PC-3 (cell line): ENCODE measurements at regions of chr7 and their contacts with region 1.

Region 1: DNA sequence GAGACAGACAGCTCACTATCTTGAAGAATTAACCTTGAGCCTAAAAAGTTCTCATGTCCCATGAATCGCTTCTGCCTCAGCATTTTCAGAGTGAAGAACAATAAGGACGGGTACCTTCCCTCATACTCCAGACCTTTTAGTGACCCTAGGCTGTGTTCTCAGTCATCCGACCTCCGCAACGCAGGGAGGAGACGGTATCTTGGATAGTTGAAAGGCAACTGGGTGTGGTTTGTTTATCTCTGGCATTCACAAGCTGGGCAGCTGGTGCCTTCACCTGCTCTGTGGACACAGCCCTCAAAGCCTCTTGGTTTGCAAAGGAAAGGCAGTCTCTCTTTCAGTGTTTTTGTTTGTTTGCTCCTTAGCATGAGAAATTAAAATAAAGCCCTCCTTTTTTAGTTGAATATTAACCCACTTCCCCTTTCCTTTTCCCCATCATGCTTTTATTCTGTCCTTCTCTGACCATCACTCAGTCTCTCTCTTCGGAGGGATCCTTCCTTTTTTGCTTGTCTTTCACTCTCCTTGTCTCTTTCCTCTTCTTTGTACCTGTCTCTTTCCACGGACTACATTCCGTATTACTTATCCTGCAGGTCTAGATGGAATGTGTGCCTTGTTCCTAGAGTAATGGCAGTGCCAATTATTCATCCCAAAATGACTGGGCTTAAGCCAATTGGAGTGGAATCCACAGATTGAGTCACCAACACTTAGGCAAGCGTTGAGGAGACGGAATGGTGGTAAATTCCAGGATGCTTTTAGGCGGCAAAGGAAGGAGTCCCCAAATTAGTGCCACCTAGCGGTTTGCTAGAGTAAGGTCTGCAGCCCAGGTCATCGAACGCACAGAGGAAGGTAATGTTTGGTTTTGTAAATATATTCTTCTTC is 45.8 kb downstream of the PRR15 start:
- DNase-seq: peak; percentile 88
- ATAC-seq: peak; percentile 8
- H3K4me3 ChIP-seq: peak overlapping the region; percentile 29; the same call in 1 of the 2 replicates
- H3K27ac ChIP-seq: peak overlapping the region; percentile 94
- H3K4me1 ChIP-seq: peaks cover 75% of the 10 kb centered on the region
- H3K27me3 ChIP-seq: no peaks in the 10 kb centered on the region
- CTCF ChIP-seq: peak; percentile 87

Region 2: DNA sequence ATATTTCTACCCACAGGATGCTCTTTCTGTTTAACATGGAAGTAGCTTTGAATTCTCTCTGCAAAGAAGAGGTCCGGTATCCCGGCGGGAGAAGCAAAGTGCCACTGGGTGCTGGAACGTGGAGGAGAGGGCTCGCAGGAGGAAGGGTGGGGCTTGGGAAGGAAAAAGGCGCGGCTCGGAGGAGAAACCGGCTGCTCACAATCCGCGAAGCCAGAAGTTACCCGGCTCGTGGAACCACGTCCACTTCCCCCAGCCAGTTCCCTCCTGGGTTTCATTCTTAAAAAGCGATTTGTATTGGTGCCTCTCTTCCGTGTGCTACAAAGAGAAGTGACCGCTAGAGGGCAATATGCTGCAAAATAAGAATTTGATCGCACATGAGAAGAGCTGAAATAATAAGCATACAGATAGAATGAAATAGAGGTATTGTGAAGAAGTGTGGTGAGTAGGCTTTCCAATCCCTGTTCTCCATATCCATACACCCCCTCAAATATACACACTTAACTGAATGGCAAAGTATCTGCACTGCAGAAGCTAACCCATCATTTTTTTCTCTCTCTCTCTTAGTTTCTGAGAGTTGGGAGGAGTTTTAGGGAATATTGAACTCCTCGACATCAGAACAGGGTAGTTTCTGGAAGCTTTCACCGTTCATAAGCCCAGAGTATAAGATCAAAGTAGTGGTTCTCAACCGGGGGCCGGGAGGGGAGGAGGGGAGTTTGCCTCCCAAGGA is 682.4 kb before region 1 on chr7:
- CTCF ChIA-PET with region 1: no interaction called
- POLR2A ChIA-PET with region 1: no interaction called
- intact Hi-C with region 1: loop called (anchors 10 kb)
- DNase-seq: peak; percentile 96
- ATAC-seq: peak; percentile 96
- H3K4me3 ChIP-seq: peak overlapping the region; percentile 75
- H3K27ac ChIP-seq: no peak overlapping the region
- H3K4me1 ChIP-seq: peaks cover 5% of the 10 kb centered on the region; the same call in 1 of the 2 replicates
- H3K27me3 ChIP-seq: no peaks in the 10 kb centered on the region
- CTCF ChIP-seq: peak; percentile 87

Region 3: GRCh38 chr7:29146057-29146706 is 463.2 kb before region 1 on chr7 and contains the start of gene CPVL:
- CTCF ChIA-PET with region 1: no interaction called
- POLR2A ChIA-PET with region 1: no interaction called
- intact Hi-C with region 1: loop called (anchors 10 kb)
- DNase-seq: peak; percentile 73
- ATAC-seq: peak; percentile 75
- H3K4me3 ChIP-seq: peak within 1 kb of the TSS; percentile 73
- H3K27ac ChIP-seq: peak within 1 kb of the TSS; percentile 13; the same call in 1 of the 2 replicates
- H3K4me1 ChIP-seq: peaks cover 17% of the 10 kb centered on the region
- H3K27me3 ChIP-seq: no peaks in the 10 kb centered on the region
- CTCF ChIP-seq: no peak
- total RNA-seq, gene CPVL: 14.7 and 15.3 TPM in 2 replicates

Region 4: DNA sequence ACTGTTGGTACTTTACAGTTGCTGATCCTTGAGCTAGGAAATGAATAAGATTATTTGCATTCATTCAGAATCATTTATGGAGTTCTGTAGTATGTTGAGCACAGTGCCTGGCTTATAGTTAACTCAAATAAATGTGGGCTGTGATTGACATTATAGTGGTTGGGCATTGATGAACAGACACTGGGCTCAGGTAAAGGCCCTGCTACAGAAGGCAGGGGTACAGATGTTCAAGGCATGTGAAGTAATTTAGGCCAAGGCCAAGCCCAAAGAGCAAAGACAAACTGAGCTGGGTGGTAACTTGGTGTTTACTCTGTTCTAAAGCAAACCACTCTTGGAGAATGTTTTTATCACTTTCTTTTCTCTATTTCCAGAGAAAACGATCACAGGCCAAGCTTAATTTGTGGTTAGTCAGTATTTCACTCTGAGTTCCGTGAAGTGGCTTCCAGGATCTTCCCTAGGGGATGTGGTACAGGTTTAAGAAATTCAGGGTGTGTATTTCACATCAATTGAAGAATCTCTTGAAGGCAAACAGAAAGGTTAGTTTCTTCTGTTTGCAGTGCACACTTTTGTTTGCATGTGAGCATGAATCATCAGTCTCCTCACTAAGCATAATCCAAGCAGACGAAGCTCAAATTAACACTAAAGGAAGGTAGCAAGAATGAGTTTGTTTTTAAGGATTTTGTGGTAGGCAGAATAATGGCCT is 159.7 kb before region 1 on chr7:
- CTCF ChIA-PET with region 1: no interaction called
- POLR2A ChIA-PET with region 1: no interaction called
- intact Hi-C with region 1: loop called (anchors 5 kb)
- DNase-seq: peak; percentile 81
- ATAC-seq: peak; percentile 95
- H3K4me3 ChIP-seq: no peak overlapping the region; the same call in 1 of the 2 replicates
- H3K27ac ChIP-seq: peak overlapping the region; percentile 71
- H3K4me1 ChIP-seq: peaks cover 32% of the 10 kb centered on the region
- H3K27me3 ChIP-seq: no peaks in the 10 kb centered on the region
- CTCF ChIP-seq: no peak

Region 5: GRCh38 chr7:29508608-29509007 is 100.8 kb before region 1 on chr7:
- CTCF ChIA-PET with region 1: no interaction called
- POLR2A ChIA-PET with region 1: no interaction called
- intact Hi-C with region 1: no loop called
- DNase-seq: no peak
- ATAC-seq: no peak
- H3K4me3 ChIP-seq: no peak overlapping the region
- H3K27ac ChIP-seq: no peak overlapping the region
- H3K4me1 ChIP-seq: no peaks in the 10 kb centered on the region
- H3K27me3 ChIP-seq: no peaks in the 10 kb centered on the region
- CTCF ChIP-seq: no peak

Region 6: GRCh38 chr7:29622335-29623265 is 13.2 kb after region 1 on chr7:
- CTCF ChIA-PET with region 1: interaction called, 3 read pairs
- POLR2A ChIA-PET with region 1: interaction called, 4 read pairs
- intact Hi-C with region 1: loop called (anchors 2 kb)
- DNase-seq: peak; percentile 94
- ATAC-seq: peak; percentile 88
- H3K4me3 ChIP-seq: peak overlapping the region; percentile 45
- H3K27ac ChIP-seq: peak overlapping the region; percentile 80
- H3K4me1 ChIP-seq: peaks cover 43% of the 10 kb centered on the region
- H3K27me3 ChIP-seq: no peaks in the 10 kb centered on the region
- CTCF ChIP-seq: peak; percentile 23; the same call in 1 of the 2 replicates